ENCODE measurements at regions of chr2 and their contacts with region 1.

Region 1: DNA sequence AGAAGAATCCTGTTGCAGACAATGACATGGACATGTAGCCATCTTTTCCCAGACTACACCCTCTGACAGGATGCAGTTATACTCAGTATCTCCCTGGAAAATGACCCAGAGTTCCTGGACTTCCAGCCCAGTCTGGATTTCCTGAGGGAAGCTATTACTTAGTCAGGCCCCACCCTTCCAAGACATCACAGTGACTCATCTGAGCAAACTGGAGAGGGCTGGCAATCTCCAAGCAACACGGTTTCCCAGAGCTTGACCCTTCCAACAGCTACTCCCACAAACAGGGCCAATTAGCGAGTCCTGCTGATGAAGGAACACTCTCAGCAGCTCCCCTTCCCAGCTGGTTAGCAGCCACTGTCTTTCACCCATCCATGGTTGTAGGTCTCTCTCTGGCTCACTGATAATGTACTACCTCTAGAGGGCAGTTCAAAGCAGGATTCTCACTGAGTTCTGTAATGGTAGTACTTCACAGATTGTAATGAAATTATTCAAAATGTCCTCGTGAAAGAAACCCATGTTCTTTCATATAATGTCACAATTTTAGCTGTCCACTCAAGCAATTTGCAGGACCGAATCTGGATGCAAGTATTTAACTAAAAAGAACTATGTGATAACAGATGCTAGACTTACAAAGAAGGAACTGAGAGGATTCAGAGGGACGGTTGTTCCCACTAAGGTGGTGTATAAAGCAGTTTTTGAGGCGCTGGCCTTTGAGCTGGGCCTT is 110.2 kb downstream of the MDH1 start:
- DNase-seq: no peak
- H3K4me3 ChIP-seq: no peak overlapping the region
- CTCF ChIP-seq: peak; percentile 50

Region 2: GRCh38 chr2:63544017-63544627 is 154.9 kb before region 1 on chr2:
- CTCF ChIA-PET with region 1: no interaction called
- POLR2A ChIA-PET with region 1: no interaction called
- DNase-seq: no peak
- H3K4me3 ChIP-seq: no peak overlapping the region
- CTCF ChIP-seq: peak; percentile 19

Region 3: GRCh38 chr2:63569740-63570139 is 129.2 kb before region 1 on chr2:
- CTCF ChIA-PET with region 1: no interaction called
- POLR2A ChIA-PET with region 1: no interaction called
- DNase-seq: no peak
- H3K4me3 ChIP-seq: no peak overlapping the region
- CTCF ChIP-seq: no peak

Region 4: DNA sequence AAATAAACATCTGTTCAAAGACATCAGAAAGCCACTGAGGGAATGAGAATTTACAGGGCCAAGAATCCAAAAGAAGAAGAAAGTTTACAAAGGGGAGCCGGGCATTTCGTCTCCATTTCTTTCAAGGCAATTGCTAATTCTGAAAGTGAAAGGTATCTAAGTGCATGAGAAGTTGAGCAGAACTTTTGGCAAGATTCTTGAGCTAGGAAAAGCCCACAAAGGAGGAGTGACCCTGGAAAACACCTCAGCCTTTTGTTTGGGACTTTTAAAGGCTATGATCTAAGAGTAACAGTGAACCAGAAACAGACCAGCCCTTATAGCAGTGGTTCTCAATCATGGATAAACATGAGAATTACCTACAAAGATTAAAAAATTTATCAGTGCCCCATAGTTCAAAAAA is 22.9 kb before region 1 on chr2:
- CTCF ChIA-PET with region 1: interaction called, 19 read pairs
- POLR2A ChIA-PET with region 1: no interaction called
- DNase-seq: no peak
- H3K4me3 ChIP-seq: no peak overlapping the region
- CTCF ChIP-seq: no peak

Region 5: GRCh38 chr2:63712748-63713147 is 13.8 kb after region 1 on chr2:
- CTCF ChIA-PET with region 1: interaction called, 19 read pairs
- POLR2A ChIA-PET with region 1: interaction called, 3 read pairs
- DNase-seq: no peak
- H3K4me3 ChIP-seq: no peak overlapping the region
- CTCF ChIP-seq: no peak

Region 6: DNA sequence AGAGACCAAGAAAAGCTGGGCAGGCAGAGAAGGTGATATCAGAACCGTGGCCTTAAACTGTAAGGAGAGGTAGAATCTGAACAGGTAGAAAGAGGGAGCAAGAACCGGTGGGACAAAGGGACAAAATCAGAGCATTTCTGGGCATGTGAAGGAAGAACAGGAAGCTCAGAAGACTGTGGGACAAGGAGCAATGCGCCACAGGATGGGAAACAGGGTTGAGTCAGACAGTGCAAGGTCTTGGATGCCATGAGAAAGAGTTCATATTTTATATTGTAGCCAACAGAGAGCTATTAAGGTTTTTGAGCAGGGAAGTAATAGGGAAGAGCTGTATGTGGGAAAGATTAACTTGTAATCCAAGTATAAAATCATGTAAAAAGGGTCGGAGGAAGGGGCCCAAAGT is 36.3 kb after region 1 on chr2:
- CTCF ChIA-PET with region 1: interaction called, 10 read pairs
- POLR2A ChIA-PET with region 1: no interaction called
- DNase-seq: no peak
- H3K4me3 ChIP-seq: no peak overlapping the region
- CTCF ChIP-seq: no peak

Region 7: GRCh38 chr2:63841254-63842022 is 142.5 kb after region 1 on chr2 and contains the start of gene UGP2:
- CTCF ChIA-PET with region 1: interaction called, 26 read pairs
- POLR2A ChIA-PET with region 1: interaction called, 27 read pairs
- DNase-seq: peak; percentile 72
- H3K4me3 ChIP-seq: peak within 1 kb of the TSS; percentile 83
- CTCF ChIP-seq: peak; percentile 33

Region 8: DNA sequence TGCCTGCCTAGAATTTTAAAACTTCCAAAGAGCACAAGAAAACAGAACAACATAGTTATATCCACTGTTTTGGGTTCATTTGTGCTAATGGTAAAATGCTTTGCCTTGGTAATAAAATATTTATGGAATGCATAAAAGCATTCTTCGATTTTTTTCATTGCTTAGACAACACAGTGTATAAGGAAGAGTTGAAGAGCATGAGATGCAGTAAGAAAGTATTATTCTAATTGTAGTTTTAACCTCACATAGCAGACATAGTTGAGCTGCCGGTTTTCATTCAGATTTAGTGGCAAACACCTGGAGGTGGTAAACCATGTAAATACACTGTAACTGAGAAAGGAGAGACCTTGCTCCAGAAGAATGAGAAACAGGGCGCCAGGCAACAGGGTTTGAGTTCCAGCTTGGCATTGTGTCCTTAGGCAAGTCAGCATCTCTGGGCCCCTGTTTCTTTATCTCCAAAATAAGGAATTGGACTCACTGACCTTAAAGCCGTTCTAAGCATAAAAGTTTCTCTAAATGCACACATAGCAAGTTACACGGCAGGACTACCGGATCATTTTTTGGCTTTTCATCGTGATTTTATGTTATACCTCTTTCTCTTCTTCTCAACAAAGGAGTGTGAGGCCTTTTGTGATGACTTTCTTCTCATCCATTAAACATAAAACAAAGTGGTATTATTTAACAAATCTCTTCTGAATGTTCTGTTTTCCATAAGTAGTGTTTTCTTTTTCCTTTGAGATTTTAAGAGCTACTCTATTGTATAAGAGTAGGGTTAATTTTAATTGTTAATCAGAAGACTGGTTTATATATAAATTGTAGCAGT is 150.6 kb after region 1 on chr2:
- CTCF ChIA-PET with region 1: interaction called, 48 read pairs
- POLR2A ChIA-PET with region 1: no interaction called
- DNase-seq: no peak
- H3K4me3 ChIP-seq: no peak overlapping the region
- CTCF ChIP-seq: no peak

Region 9: DNA sequence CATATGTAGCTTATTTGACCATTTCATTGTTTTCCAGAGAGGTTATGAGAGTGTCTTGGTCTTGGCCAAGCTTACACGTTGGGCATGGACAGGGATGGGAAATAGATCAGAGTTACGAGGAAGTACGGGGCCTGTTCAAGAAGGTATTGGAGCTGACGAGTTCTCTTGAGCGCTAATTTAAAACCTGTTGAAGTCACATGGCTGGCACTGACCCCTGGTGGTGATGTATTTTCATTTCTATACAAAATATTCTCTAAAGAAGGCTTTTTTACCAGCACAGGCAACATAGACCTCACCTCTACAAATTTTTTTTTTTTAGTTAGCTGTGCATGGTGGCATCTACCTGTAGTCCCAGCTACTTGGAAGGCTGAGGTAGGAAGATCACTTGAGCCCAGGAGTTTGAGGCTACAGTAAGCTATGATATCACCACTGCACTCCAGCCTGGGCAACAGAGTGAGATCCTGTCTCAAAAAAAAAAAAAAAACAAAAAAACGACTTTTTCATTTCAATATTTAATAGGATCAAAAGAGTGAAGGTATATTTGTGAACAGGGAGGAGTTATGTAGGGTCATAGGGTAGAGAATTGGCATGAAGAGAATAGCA is 162.3 kb after region 1 on chr2:
- CTCF ChIA-PET with region 1: interaction called, 170 read pairs
- POLR2A ChIA-PET with region 1: interaction called, 3 read pairs
- DNase-seq: no peak
- H3K4me3 ChIP-seq: no peak overlapping the region
- CTCF ChIP-seq: peak; percentile 21